Ovary (tissue), 10 donors: ENCODE measurements at regions of chr10 and their contacts with region 1.

Region 1: DNA sequence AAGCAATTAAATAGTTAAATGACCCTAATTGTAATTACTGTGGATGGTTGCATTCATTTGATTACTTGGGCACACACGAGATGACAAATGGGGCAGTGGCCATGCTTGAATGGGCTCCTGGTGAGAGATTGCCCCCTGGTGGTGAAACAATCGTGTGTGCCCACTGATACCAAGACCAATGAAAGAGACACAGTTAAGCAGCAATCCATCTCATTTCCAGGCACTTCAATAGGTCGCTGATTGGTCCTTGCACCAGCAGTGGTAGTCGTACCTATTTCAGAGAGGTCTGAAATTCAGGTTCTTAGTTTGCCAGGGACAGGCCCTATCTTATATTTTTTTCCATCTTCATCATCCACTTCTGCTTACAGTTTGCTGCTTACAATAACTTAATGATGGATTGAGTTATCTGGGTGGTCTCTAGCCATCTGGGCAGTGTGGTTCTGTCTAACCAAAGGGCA is 8.3 kb downstream of the PCBD1 start:
- DNase-seq: peak; percentile 63 to 76 (median 72)
- H3K4me3 ChIP-seq: no peak overlapping the region
- H3K27ac ChIP-seq: no peak overlapping the region
- H3K4me1 ChIP-seq: no peaks in the 10 kb centered on the region
- H3K27me3 ChIP-seq: no peaks in the 10 kb centered on the region
- CTCF ChIP-seq: peak; percentile 65 to 82 (median 74)
- EP300 ChIP-seq: no peak
- POLR2A ChIP-seq: no peak

Region 2: GRCh38 chr10:70549962-70550458 is 330.1 kb before region 1 on chr10:
- intact Hi-C with region 1: loop called in 3 of 4 experiments (anchors 5 to 10 kb)
- DNase-seq: peak; percentile 49 to 78 (median 73)
- H3K4me3 ChIP-seq: no peak overlapping the region
- H3K27ac ChIP-seq: no peak overlapping the region
- H3K4me1 ChIP-seq: peaks cover 3% of the 10 kb centered on the region
- H3K27me3 ChIP-seq: no peaks in the 10 kb centered on the region
- CTCF ChIP-seq: peak; percentile 56 to 77 (median 63)
- EP300 ChIP-seq: no peak
- POLR2A ChIP-seq: no peak

Region 3: GRCh38 chr10:70714245-70714644 is 165.9 kb before region 1 on chr10:
- intact Hi-C with region 1: no loop called
- DNase-seq: no peak
- H3K4me3 ChIP-seq: no peak overlapping the region
- H3K27ac ChIP-seq: no peak overlapping the region
- H3K4me1 ChIP-seq: no peaks in the 10 kb centered on the region
- H3K27me3 ChIP-seq: no peaks in the 10 kb centered on the region
- CTCF ChIP-seq: no peak
- EP300 ChIP-seq: no peak
- POLR2A ChIP-seq: no peak

Region 4: DNA sequence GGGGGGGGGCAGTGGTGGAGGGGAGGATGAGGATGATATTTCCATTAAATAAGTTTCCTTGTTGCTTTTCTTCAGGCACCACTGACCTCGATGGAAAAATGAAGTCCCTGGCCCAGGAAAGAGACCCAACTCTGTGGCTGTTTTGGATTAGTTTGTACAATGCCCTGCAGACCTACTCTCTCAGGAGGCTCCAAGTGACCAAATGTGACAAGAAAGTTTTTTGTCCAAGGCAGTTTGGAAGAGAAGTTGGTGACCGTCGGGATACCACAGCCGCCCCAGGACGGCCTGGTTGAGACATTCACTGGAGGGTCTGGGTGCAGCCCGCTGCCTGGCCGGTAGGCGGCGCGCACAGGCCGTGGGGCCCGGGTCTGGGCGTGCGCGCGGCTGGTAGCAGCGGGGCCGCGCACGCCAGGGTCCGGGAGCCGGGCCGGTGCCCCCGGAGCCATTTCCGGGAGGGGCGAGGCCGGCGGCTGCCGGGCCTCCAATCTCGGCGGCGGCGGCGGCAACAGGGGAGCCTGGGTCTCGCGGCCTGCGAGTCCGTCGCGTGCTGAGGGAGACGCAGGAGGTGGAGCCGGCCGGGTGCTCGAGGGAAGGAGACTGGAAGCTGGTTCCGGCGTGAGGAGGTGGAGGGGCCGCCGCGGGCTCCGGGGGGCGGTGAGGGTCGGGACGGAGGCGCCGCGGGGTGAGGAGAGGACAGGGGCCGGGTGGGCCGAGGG is 64.4 kb before region 1 on chr10 and contains the start of gene SGPL1:
- intact Hi-C with region 1: loop called (anchors 2 to 10 kb)
- DNase-seq: peak; percentile 76 to 92 (median 87)
- H3K4me3 ChIP-seq: peak within 1 kb of the TSS; percentile 85
- H3K27ac ChIP-seq: peak within 1 kb of the TSS; percentile 69 to 72
- H3K4me1 ChIP-seq: no peaks in the 10 kb centered on the region
- H3K27me3 ChIP-seq: no peaks in the 10 kb centered on the region
- CTCF ChIP-seq: peak; percentile 92 to 98 (median 97)
- EP300 ChIP-seq: no peak
- POLR2A ChIP-seq: peak; percentile 53
- total RNA-seq, gene SGPL1: 19.6 to 52.6 (median 33.4) TPM